ENCODE measurements at regions of chr4 and their contacts with region 1.

Region 1: DNA sequence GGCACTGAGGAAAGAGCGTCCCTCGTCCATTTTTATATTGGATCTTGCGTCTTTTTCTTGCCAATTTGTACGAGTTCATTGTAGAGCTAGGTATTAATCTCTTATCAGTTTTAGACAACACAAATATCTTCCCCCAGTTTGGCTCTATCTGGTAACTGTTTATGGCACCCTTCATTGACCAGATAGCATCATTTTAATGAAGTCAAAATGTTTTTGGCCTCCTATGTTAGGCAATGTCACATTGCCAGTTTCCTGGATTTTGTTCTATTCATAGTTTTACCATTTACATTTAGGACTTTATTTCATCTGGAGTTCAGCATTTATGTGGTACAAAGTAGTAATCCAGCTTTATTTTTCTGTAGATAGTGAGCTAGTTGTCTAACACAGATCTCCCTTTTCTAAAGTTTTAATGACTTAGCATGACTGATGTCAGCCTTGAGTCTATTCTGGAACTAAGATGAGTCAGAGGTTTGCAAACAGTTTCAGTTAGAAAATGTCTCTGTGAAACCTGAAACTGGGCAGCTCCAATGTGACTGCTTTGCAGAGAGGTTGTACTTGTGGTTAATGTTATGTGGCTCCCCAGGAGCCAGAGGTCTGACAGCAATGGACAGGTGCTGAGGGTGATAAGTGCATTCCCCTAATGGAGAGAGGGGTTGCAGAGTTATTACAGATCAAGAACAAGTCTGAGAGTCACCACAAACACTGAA is 5.3 kb upstream of the STBD1 start:
- DNase-seq: peak; percentile 55
- ATAC-seq: peak; percentile 94
- H3K4me3 Mint-ChIP-seq: no peak overlapping the region
- H3K27ac Mint-ChIP-seq: no peak overlapping the region
- H3K4me1 Mint-ChIP-seq: peaks cover 29% of the 10 kb centered on the region
- H3K27me3 Mint-ChIP-seq: peaks cover 23% of the 10 kb centered on the region

Region 2: GRCh38 chr4:76311896-76312331 is 10.7 kb after region 1 on chr4:
- CTCF ChIA-PET with region 1: interaction called, 3 read pairs
- POLR2A ChIA-PET with region 1: interaction called, 4 read pairs
- intact Hi-C with region 1: loop called in 1 of 2 experiments (anchors 1 kb)
- DNase-seq: no peak
- ATAC-seq: no peak
- H3K4me3 Mint-ChIP-seq: no peak overlapping the region
- H3K27ac Mint-ChIP-seq: no peak overlapping the region
- H3K4me1 Mint-ChIP-seq: no peaks in the 10 kb centered on the region
- H3K27me3 Mint-ChIP-seq: peaks cover 31% of the 10 kb centered on the region

Region 3: GRCh38 chr4:76339364-76339763 is 38.1 kb after region 1 on chr4:
- CTCF ChIA-PET with region 1: no interaction called
- POLR2A ChIA-PET with region 1: no interaction called
- intact Hi-C with region 1: no loop called
- DNase-seq: no peak
- ATAC-seq: no peak
- H3K4me3 Mint-ChIP-seq: no peak overlapping the region
- H3K27ac Mint-ChIP-seq: no peak overlapping the region
- H3K4me1 Mint-ChIP-seq: no peaks in the 10 kb centered on the region
- H3K27me3 Mint-ChIP-seq: peaks cover 7% of the 10 kb centered on the region

Region 4: DNA sequence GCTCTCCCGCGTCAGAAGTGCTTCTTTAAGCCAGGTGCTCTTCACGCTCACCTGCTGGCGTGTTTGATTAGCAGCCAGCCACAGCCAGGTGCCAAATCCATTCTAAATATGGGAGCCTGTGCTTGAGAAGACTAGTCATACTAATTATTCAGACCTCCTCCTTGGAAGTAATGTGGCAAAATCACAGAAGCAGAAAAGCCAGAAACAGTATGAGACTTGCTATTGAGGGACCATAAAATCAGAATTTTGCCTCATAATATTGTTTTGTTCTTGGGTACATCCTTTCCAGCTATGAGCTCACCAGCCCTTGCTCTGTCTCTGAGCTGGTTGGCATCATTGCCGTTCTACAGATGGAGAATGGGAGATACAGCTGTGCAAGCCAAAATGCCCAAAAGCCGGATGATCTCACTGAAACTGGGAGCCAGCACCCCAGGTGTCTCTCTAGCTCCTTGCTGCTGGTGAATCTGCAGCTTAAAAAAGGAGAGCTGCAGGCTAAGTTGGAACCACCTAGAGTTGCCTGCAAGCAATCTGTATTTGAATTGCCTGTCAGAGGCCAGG is 339.2 kb after region 1 on chr4:
- CTCF ChIA-PET with region 1: no interaction called
- POLR2A ChIA-PET with region 1: no interaction called
- intact Hi-C with region 1: no loop called
- DNase-seq: no peak
- ATAC-seq: no peak
- H3K4me3 Mint-ChIP-seq: no peak overlapping the region
- H3K27ac Mint-ChIP-seq: no peak overlapping the region
- H3K4me1 Mint-ChIP-seq: no peaks in the 10 kb centered on the region
- H3K27me3 Mint-ChIP-seq: peaks cover 10% of the 10 kb centered on the region

Measured in activated CD4-positive, alpha-beta T cell treated with anti-CD3 and anti-CD28 coated beads for 36 hours (primary cell).